Heart left ventricle (tissue), 16 donors: ENCODE measurements at regions of chr12 and their contacts with region 1.

Region 1: DNA sequence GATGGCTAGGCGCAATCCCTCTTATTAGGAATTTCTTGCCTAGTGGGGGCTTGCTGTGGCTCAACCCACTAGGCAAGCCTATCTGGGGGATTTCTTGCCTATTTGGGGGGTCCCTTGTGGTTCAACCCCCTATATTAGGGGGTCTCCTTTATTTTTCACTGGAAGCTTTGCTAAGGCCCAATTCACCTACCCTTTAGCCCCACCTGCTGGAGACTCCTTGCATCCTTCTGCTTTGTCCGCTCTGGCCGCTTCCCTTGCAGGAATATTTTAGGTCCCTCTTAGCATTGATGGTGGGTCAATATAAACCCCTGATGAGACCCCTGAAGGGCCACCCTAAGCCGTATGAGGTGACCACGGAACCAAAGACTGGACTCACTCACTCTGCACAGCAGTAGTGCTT is 1552.1 kb downstream of the AACS start:
- DNase-seq: no peak
- ATAC-seq: no peak
- H3K4me3 ChIP-seq: no peak overlapping the region
- H3K27ac ChIP-seq: no peak overlapping the region
- H3K4me1 ChIP-seq: no peaks in the 10 kb centered on the region
- H3K27me3 ChIP-seq: no peaks in the 10 kb centered on the region
- CTCF ChIP-seq: peak in 8 of 12 donors; percentile 13 to 43 (median 32)
- POLR2A ChIP-seq: no peak

Region 2: DNA sequence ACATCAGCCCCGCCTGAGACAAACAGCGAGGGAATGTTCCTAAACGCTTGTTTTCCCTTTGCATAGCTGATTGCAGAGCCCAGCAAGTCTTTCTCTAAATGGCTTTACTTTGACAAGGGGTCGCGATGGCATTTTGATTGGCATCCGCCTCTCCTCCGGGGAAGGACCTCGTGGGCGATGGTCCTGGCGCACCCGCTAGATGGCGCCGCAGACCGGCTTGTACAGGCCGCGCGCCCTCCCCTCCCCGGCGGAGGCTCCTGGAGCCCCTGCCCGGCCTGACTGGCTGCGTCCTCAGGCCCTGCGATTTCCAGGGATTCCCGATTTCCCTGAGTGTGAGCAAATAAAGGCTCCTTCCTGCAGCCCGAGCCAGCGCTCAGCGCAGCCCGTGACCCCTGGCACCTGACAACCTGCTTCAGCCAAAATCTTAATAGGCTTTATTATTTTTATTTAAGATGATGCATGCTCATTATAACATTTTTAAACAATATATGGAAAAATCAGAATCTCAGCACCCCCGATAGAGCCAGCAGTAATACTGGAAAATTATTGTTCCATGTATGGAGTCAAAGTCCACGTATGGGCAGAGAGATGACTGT is 1083.8 kb before region 1 on chr12:
- intact Hi-C with region 1: loop called in 3 of 10 experiments (anchors 5 to 10 kb)
- DNase-seq: peak in 1 of 5 donors; percentile 25
- ATAC-seq: peak in 3 of 4 donors; percentile 56 to 69 (median 68)
- H3K4me3 ChIP-seq: no peak overlapping the region
- H3K27ac ChIP-seq: no peak overlapping the region
- H3K4me1 ChIP-seq: no peaks in the 10 kb centered on the region
- H3K27me3 ChIP-seq: peaks cover 0 to 37% (median 4%) of the 10 kb centered on the region in 9 donors
- CTCF ChIP-seq: peak; percentile 33 to 71 (median 64)
- POLR2A ChIP-seq: no peak

Region 3: GRCh38 chr12:126290456-126290855 is 326.9 kb before region 1 on chr12:
- intact Hi-C with region 1: no loop called
- DNase-seq: no peak
- ATAC-seq: no peak
- H3K4me3 ChIP-seq: no peak overlapping the region
- H3K27ac ChIP-seq: no peak overlapping the region
- H3K4me1 ChIP-seq: no peaks in the 10 kb centered on the region
- H3K27me3 ChIP-seq: no peaks in the 10 kb centered on the region
- CTCF ChIP-seq: no peak
- POLR2A ChIP-seq: no peak